ENCODE measurements at regions of chr5 and their contacts with region 1.

Region 1: DNA sequence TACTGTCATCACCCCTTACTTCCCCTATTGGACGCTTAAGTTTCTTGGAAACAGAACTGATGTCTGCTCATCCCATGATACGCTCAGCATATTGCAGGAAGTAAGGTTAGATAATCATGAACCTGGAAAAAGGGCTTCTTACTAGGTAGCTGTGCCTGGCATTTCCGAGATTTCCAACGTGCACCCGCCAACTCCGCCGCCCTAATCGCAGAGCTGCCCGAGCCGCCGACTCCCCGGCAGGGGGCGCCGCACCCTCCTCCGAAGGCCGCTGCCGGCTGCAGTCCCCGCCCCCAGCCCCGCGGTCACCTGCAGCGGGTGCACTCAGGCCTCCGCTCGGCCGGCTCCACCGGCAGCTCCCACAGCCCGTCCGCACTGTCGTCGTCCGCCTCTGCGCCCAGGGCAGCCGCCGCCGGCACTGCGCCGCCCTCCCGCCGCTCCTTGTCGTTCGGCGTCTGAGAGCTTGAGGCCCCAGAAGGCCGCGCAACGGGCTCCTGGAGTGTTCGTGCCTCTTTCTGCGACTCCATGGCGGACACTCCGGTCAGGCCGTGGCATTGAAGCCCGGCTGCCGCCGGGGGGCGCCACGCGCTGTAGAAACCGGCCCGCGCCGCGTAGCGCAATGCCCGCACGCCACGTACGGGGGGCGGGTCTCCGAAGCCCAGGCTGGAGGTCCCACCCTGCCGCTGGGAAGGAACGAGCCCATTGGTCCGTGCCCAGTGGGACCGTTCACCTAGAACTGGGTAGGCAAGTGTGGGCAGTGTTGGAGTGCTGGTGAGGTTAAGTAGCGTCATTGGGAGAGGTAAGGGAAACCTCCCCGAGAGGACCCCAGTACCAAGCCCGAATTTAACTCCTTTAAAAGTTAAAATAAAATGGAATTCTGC is at the start of gene DTWD2:
- DNase-seq: peak; percentile 81
- ATAC-seq: peak; percentile 96
- H3K4me3 ChIP-seq: peak within 1 kb of the TSS; percentile 74
- H3K27ac ChIP-seq: peak within 1 kb of the TSS; percentile 75
- H3K4me1 ChIP-seq: peaks cover 7% of the 10 kb centered on the region; the same call in 1 of the 2 replicates
- H3K27me3 ChIP-seq: no peaks in the 10 kb centered on the region
- CTCF ChIP-seq: peak; percentile 71 to 96 (median 92)
- EP300 ChIP-seq: 0 out of 4 replicates have a peak, but pooled peaks have one; percentile 8
- POLR2A ChIP-seq: peak; percentile 83
- RAD21 ChIP-seq: peak; percentile 86
- polyA plus RNA-seq, gene DTWD2: 0.93 to 1.0 TPM

Region 2: DNA sequence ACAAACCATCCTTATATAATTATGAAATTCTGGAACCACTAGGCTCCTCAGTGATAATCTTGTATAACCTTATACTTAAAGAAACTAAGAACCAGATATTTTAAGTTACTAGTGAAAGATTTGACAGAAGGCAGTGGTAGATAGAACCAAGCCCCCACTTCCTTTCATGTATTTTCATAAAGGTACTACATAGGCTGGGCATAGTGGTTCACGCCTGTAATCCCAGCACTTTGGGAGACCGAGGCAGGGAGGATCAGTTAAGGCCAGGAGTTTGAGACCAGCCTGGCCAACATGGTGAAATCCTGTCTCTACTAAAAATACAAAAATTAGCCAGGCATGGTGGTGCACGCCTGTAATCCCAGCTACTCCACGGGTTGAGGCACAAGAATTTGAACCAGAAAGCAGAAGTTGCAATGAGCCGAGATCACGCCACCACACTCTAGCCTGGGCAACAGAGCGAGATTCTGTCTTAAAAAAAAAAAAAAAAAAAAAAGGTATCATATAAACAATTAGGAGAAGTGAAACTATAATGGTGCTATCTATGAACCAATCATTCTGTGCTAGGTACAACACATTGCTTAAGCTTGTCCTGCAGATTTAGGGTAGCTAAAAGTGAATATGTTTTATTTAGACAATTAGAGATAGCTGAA is 28.0 kb after region 1 on chr5:
- CTCF ChIA-PET with region 1: interaction called, 12 read pairs
- POLR2A ChIA-PET with region 1: interaction called, 5 read pairs
- RAD21 ChIA-PET with region 1: interaction called, 14 read pairs
- SMC1A ChIA-PET with region 1: interaction called, 12 read pairs
- in situ Hi-C with region 1: no loop called
- intact Hi-C with region 1: loop called (anchors 2 kb)
- DNase-seq: no peak
- ATAC-seq: peak; percentile 92
- H3K4me3 ChIP-seq: no peak overlapping the region
- H3K27ac ChIP-seq: peak overlapping the region; percentile 60
- H3K4me1 ChIP-seq: peaks cover 4% of the 10 kb centered on the region
- H3K27me3 ChIP-seq: no peaks in the 10 kb centered on the region
- CTCF ChIP-seq: no peak
- EP300 ChIP-seq: no peak
- POLR2A ChIP-seq: no peak
- RAD21 ChIP-seq: no peak

Region 3: DNA sequence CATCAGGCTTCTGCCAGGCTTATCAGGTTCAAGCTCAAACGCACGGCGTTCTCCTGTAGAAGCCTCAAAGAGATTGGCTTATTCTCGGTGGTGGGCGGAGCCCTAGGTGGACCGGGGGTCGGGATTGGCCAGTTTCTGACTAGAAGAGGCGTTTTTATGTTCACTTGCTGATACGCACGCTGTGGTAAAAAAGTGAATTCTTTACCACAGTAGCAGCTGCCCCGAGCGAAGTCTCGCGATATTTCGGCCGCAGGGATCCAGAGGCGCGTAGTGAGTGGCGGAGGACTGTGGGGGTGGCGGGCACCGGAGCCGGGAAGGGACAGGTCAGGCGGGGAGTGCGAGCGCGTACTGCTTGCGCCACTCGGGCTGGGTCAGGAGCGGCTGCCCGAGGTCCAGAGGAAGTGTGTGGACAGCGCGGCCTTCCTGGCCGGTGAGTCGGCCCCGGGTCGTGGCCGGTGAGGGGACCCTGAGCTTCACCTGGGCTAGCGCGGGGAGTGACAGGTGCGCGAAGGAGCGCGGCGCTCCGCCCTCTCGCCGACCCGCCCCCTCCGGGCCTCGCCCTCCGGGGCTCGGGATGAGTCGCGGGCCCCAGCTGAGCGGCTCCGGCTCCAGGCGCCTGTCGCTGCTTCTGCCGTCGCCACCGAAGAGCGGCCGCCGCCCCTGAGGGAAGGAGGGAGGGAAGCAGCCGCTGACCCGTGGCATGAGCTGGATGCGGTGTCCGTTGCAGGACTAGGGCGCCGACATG is 82.8 kb after region 1 on chr5 and contains the start of gene DMXL1:
- CTCF ChIA-PET with region 1: interaction called, 15 read pairs
- POLR2A ChIA-PET with region 1: interaction called, 4 read pairs
- RAD21 ChIA-PET with region 1: interaction called, 10 read pairs
- SMC1A ChIA-PET with region 1: interaction called, 6 read pairs
- in situ Hi-C with region 1: no loop called
- intact Hi-C with region 1: loop called (anchors 2 kb)
- DNase-seq: peak; percentile 99
- ATAC-seq: peak; percentile 84
- H3K4me3 ChIP-seq: peak within 1 kb of the TSS; percentile 79
- H3K27ac ChIP-seq: peak within 1 kb of the TSS; percentile 91
- H3K4me1 ChIP-seq: peaks cover 5% of the 10 kb centered on the region
- H3K27me3 ChIP-seq: no peaks in the 10 kb centered on the region
- CTCF ChIP-seq: no peak
- EP300 ChIP-seq: 0 out of 4 replicates have a peak, but pooled peaks of 1 of the 2 experiments have one; percentile 8
- POLR2A ChIP-seq: peak; percentile 91
- RAD21 ChIP-seq: no peak
- polyA plus RNA-seq, gene DMXL1: 9.1 to 11.0 TPM

Region 4: GRCh38 chr5:119267958-119268386 is 279.7 kb after region 1 on chr5:
- CTCF ChIA-PET with region 1: interaction called, 17 read pairs
- POLR2A ChIA-PET with region 1: interaction called, 3 read pairs
- RAD21 ChIA-PET with region 1: interaction called, 5 read pairs
- SMC1A ChIA-PET with region 1: interaction called, 8 read pairs
- in situ Hi-C with region 1: no loop called
- intact Hi-C with region 1: loop called (anchors 1 kb)
- DNase-seq: peak; percentile 81
- ATAC-seq: peak; percentile 81
- H3K4me3 ChIP-seq: peak overlapping the region; percentile 99
- H3K27ac ChIP-seq: peak overlapping the region; percentile 90
- H3K4me1 ChIP-seq: peaks cover 13% of the 10 kb centered on the region
- H3K27me3 ChIP-seq: no peaks in the 10 kb centered on the region
- CTCF ChIP-seq: peak; percentile 63 to 80 (median 68)
- EP300 ChIP-seq: no peak
- POLR2A ChIP-seq: no peak
- RAD21 ChIP-seq: peak; percentile 46; the same call in 1 of the 2 replicates

Region 5: DNA sequence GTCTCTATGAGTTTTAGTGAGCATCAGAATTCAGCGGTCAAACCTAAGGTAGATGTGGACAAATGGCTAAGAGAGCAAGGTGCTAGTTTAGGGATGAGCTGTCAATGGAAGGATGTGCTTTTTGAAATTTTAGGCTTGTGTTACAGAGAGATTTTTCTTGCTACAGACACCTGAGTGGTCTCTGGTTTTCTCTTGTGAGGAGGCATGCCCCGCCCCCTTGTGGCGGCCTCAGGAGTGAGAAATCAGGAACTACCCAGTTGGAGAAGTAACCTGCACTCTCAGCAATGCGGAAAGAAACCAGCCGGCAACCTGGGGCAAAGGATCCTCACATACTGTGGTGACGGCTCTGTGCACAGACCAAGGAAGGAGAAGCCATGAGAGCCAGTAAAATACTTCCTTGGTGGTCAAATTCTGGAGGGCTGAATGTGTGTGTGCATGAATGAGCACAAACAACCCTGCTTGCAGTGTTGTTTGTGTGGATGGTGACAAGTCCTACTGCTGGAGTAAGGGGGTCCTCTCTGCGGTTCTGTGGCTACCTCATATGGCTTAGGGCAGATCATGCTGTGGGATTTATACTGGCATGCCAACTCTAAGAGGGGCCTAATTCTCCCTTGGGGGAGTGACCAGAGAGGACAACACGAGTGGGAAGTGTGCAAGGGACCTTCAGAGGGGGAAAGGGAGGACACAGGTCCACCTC is 447.4 kb after region 1 on chr5:
- CTCF ChIA-PET with region 1: interaction called, 30 read pairs
- POLR2A ChIA-PET with region 1: no interaction called
- RAD21 ChIA-PET with region 1: interaction called, 18 read pairs
- SMC1A ChIA-PET with region 1: interaction called, 19 read pairs
- in situ Hi-C with region 1: no loop called
- intact Hi-C with region 1: loop called (anchors 1 kb)
- DNase-seq: peak; percentile 44
- ATAC-seq: peak; percentile 95
- H3K4me3 ChIP-seq: no peak overlapping the region
- H3K27ac ChIP-seq: no peak overlapping the region
- H3K4me1 ChIP-seq: peaks cover 5% of the 10 kb centered on the region; the same call in 1 of the 2 replicates
- H3K27me3 ChIP-seq: no peaks in the 10 kb centered on the region
- CTCF ChIP-seq: peak; percentile 64 to 69 (median 64)
- EP300 ChIP-seq: no peak
- POLR2A ChIP-seq: no peak
- RAD21 ChIP-seq: peak; percentile 75

Region 6: GRCh38 chr5:120457839-120458507 is 1469.7 kb after region 1 on chr5:
- CTCF ChIA-PET with region 1: no interaction called
- POLR2A ChIA-PET with region 1: no interaction called
- RAD21 ChIA-PET with region 1: no interaction called
- SMC1A ChIA-PET with region 1: no interaction called
- in situ Hi-C with region 1: loop called (anchors 25 kb)
- intact Hi-C with region 1: no loop called
- DNase-seq: peak; percentile 85
- ATAC-seq: peak; percentile 95
- H3K4me3 ChIP-seq: no peak overlapping the region
- H3K27ac ChIP-seq: peak overlapping the region; percentile 53; the same call in 1 of the 2 replicates
- H3K4me1 ChIP-seq: no peaks in the 10 kb centered on the region
- H3K27me3 ChIP-seq: no peaks in the 10 kb centered on the region
- CTCF ChIP-seq: peak; percentile 38 to 75 (median 61)
- EP300 ChIP-seq: peak; percentile 15 to 52; a peak in 1 of 4 replicates
- POLR2A ChIP-seq: no peak
- RAD21 ChIP-seq: peak; percentile 34; the same call in 1 of the 2 replicates

Measured in GM12878 (cell line).